Mucosa of descending colon (tissue), 3 donors: ENCODE measurements at regions of chr10 and their contacts with region 1.

Region 1: GRCh38 chr10:46106410-46107255 is 60.6 kb upstream of the MSMB start:
- DNase-seq: peak; percentile 67 to 83 (median 67)
- ATAC-seq: peak; percentile 98
- H3K4me3 ChIP-seq: no peak overlapping the region
- H3K4me1 ChIP-seq: peaks cover 9% of the 10 kb centered on the region
- CTCF ChIP-seq: no peak

Region 2: GRCh38 chr10:46171661-46172060 is 65.0 kb after region 1 on chr10:
- intact Hi-C with region 1: no loop called
- DNase-seq: no peak
- ATAC-seq: peak; percentile 93
- H3K4me3 ChIP-seq: no peak overlapping the region
- H3K4me1 ChIP-seq: peaks cover 12% of the 10 kb centered on the region
- CTCF ChIP-seq: no peak

Region 3: DNA sequence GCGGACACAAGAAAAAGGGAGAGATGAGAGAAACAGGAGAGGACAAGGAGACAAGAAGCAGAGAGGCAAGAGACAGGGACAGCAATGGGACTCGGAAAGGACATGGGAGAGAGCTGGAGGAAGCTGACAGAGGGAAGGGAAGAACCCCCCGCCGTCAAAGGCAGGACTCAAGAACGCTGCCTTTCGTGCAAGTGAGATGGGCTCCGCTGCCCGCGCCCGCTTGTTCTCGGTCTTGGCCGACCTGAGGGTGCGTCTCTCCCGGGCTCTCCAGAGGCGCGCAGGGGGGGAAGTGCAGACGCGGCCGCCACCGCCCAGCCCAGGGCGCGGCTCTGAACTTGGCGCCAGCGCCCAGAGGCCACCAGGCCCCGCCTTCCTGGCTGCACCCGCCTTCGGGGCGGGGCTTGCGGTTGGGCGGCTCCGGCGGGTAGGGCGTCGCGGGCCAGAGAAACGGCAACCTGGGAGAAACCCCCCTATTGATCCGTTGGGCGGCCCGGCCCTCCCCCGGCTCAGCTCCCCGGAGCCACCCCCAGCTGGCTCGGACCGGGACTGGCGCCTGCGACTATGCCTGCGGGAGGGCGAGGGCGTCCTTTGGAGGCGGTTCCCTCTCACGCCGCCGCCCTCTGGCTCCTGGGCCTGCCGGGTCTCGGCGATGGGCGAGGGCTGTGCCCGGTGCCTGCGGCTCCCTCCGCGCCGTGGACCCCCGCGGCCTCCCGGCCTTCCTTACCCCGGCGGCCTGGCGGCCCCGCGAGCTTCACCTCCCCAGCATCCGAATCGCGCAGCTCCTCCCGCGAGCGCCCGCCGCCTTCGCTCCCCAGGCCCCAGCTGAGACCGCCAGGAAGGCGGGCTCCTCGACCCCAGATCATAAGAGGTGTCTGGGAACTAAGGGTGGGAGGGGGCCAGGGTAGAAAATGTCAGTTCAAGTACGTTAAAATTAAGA is 177.9 kb after region 1 on chr10:
- intact Hi-C with region 1: loop called in 1 of 2 experiments (anchors 10 kb)
- DNase-seq: peak; percentile 93 to 96 (median 94)
- ATAC-seq: peak; percentile 93
- H3K4me3 ChIP-seq: peak overlapping the region; percentile 50
- H3K4me1 ChIP-seq: peaks cover 5% of the 10 kb centered on the region
- CTCF ChIP-seq: no peak